ENCODE measurements at regions of chr6 and their contacts with region 1.

Region 1: DNA sequence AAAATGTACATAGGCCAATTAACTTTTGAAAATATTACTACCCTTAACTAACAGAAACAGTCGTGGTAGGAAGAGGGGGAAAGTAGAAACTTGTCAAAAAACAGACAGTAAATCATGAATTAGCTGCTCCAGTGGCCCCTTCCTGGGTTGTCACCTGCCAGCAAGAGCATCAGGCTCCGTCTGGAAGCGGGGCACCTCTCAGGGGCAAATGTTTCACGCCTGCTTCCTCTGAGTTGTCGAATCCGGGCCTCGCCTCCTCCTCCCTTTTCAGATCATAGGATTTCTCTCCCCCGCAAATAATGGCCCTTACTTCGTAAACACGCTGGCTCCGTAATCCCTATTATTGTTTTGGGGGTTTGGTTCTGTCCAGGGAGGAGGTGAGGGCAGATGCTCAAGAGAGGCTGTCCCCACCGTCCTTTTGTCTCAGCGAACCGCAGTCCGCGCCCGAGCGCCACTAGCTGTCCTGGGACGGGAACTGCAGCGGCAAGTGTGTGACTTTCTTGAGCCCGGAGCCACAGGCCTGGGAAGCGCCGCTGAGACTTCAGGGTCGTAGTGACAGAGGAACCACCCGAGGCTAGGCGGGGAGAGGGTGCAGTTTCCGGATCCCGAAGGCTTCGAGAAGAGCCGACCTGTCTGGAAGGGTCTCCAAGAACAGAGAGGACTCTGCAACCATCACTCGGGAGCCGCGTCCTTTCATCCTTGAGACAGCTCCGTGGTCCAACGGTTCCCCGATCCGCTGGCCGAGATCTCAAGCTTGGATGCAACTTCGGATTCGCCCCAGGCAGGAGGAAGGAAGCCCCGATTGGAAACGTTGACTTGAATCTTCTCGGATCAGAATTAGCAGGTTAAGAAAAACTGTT is 214.5 kb upstream of the ZNF184 start:
- DNase-seq: peak; percentile 66 to 81 (median 71)
- H3K4me3 ChIP-seq: peak overlapping the region; percentile 98
- H3K4me3 Mint-ChIP-seq: peak overlapping the region; percentile 86 to 96 (median 92)
- H3K27ac ChIP-seq: peak overlapping the region; percentile 65
- H3K27ac Mint-ChIP-seq: peak overlapping the region; percentile 76 to 100 (median 94)
- H3K4me1 ChIP-seq: peaks cover 16% of the 10 kb centered on the region
- H3K4me1 Mint-ChIP-seq: peaks cover 16 to 26% (median 20%) of the 10 kb centered on the region in 4 donors
- H3K27me3 ChIP-seq: peaks cover under 1% of the 10 kb centered on the region
- H3K27me3 Mint-ChIP-seq: peaks cover 6 to 14% of the 10 kb centered on the region in 2 donors

Region 2: DNA sequence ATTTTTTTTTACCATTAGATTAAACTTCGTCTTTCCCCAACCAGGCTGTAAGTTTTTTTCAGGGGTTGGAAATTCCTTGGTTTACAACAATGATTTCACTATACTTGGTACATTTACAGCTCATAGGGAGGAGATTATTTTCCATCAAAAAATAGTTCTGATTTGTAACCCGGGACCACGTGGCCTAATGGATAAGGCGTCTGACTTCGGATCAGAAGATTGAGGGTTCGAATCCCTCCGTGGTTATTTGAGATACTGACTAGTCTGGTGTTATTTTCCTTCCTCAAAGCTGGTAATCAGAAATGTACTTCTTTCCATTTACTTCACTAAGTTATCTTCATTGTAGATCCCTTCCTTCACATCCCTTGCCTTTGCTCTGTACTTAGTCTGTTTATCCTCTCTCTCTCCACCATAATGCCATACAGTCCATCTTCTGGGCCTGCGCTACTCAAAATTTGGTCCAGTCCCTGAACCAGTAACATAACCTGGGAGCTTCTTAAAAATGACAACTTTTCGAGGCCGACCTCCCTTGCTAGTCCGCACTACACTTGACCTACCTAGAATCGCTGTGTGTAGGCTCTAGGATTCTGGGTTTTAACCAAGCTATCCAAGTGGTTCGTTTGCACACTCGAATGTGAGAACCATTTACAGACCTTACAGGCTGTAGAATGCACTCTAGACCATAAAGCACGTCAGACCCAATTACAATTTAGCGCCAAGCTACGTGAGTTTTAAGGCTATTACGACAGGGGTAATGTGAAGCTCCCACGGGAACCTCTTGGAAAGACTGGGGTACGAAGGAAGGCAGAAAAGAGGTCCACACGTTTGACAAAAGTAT is 1364.5 kb before region 1 on chr6:
- CTCF ChIA-PET with region 1: no interaction called
- POLR2A ChIA-PET with region 1: no interaction called
- intact Hi-C with region 1: loop called (anchors 10 kb)
- DNase-seq: peak; percentile 75 to 80 (median 79)
- H3K4me3 ChIP-seq: peak overlapping the region in 1 of 2 donors; percentile 62
- H3K4me3 Mint-ChIP-seq: peak overlapping the region; percentile 86 to 92 (median 88)
- H3K27ac ChIP-seq: no peak overlapping the region
- H3K27ac Mint-ChIP-seq: peak overlapping the region; percentile 42 to 98 (median 82)
- H3K4me1 ChIP-seq: peaks cover 12% of the 10 kb centered on the region
- H3K4me1 Mint-ChIP-seq: peaks cover 19 to 30% (median 24%) of the 10 kb centered on the region in 4 donors
- H3K27me3 ChIP-seq: no peaks in the 10 kb centered on the region
- H3K27me3 Mint-ChIP-seq: peaks cover 8 to 22% of the 10 kb centered on the region in 2 donors

Region 3: GRCh38 chr6:27312146-27312949 is 375.0 kb before region 1 on chr6 and contains the start of gene POM121L2:
- CTCF ChIA-PET with region 1: no interaction called
- POLR2A ChIA-PET with region 1: no interaction called
- intact Hi-C with region 1: loop called (anchors 5 kb)
- DNase-seq: peak; percentile 50 to 68 (median 61)
- H3K4me3 ChIP-seq: peak within 1 kb of the TSS; percentile 44 to 57
- H3K4me3 Mint-ChIP-seq: peak within 1 kb of the TSS; percentile 81 to 86 (median 83)
- H3K27ac ChIP-seq: no peak within 1 kb of the TSS
- H3K27ac Mint-ChIP-seq: peak within 1 kb of the TSS in 3 of 7 donors; percentile 7 to 37 (median 21)
- H3K4me1 ChIP-seq: peaks cover 5% of the 10 kb centered on the region
- H3K4me1 Mint-ChIP-seq: peaks cover 0 to 14% (median 7%) of the 10 kb centered on the region in 4 donors
- H3K27me3 ChIP-seq: peaks cover 26% of the 10 kb centered on the region
- H3K27me3 Mint-ChIP-seq: peaks cover 39 to 55% of the 10 kb centered on the region in 2 donors
- total RNA-seq, gene POM121L2: not detected

Measured in CD4-positive, alpha-beta memory T cell (primary cell).